Naive thymus-derived CD4-positive, alpha-beta T cell (primary cell): ENCODE measurements at regions of chr17 and their contacts with region 1.

Region 1: DNA sequence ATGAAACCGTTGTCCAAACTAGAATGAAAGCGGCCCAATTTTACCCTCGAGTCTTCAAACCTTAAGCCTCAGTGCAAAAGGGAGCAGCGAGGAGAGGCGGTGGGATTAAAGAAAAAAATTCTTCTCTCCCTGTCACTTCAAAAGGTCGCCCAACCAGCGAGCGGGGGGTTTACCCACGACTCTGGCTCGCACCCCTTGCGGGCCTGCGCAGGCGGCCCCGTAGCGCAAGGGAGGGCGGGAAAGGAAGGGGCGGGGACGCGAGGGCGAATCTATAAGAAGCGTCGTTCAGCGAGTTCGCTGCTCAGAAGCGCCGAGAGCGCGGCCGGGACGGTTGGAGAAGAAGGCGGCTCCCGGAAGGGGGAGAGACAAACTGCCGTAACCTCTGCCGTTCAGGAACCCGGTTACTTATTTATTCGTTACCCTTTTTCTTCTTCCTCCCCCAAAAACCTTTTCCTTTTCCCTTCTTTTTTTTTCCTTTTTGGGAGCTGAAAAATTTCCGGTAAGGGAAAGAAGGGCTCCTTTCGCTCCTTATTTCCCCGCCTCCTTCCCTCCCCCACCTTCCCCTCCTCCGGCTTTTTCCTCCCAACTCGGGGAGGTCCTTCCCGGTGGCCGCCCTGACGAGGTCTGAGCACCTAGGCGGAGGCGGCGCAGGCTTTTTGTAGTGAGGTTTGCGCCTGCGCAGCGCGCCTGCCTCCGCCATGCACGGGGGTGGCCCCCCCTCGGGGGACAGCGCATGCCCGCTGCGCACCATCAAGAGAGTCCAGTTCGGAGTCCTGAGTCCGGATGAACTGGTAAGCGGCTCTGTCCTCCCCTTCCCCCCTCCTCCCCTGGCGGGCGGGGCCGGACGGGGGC is at the start of gene POLR2A:
- DNase-seq: peak; percentile 97 to 99 (median 99)
- ATAC-seq: peak; percentile 80
- H3K4me3 ChIP-seq: peak within 1 kb of the TSS; percentile 100
- H3K4me3 Mint-ChIP-seq: peak within 1 kb of the TSS; percentile 86 to 100 (median 98)
- H3K27ac ChIP-seq: peak within 1 kb of the TSS; percentile 97
- H3K27ac Mint-ChIP-seq: peak within 1 kb of the TSS; percentile 99 to 100 (median 100)
- H3K4me1 ChIP-seq: peaks cover 38 to 55% of the 10 kb centered on the region in 2 donors
- H3K4me1 Mint-ChIP-seq: peaks cover 60 to 81% (median 72%) of the 10 kb centered on the region in 7 donors
- H3K27me3 ChIP-seq: no peaks in the 10 kb centered on the region
- H3K27me3 Mint-ChIP-seq: no peaks in the 10 kb centered on the region
- total RNA-seq, gene POLR2A: 165 to 501 (median 225) TPM

Region 2: GRCh38 chr17:7035591-7036368 is 448.5 kb before region 1 on chr17 and contains the start of gene SLC16A13:
- CTCF ChIA-PET with region 1: no interaction called
- POLR2A ChIA-PET with region 1: interaction called, 4 read pairs
- intact Hi-C with region 1: loop called in 1 of 2 experiments (anchors 5 kb)
- DNase-seq: peak; percentile 87 to 99 (median 97)
- ATAC-seq: peak; percentile 95
- H3K4me3 ChIP-seq: peak within 1 kb of the TSS; percentile 67
- H3K4me3 Mint-ChIP-seq: peak within 1 kb of the TSS; percentile 89 to 95 (median 93)
- H3K27ac ChIP-seq: peak within 1 kb of the TSS; percentile 94
- H3K27ac Mint-ChIP-seq: peak within 1 kb of the TSS; percentile 96 to 99 (median 98)
- H3K4me1 ChIP-seq: peaks cover 26 to 36% of the 10 kb centered on the region in 2 donors
- H3K4me1 Mint-ChIP-seq: peaks cover 39 to 80% (median 58%) of the 10 kb centered on the region in 7 donors
- H3K27me3 ChIP-seq: no peaks in the 10 kb centered on the region
- H3K27me3 Mint-ChIP-seq: no peaks in the 10 kb centered on the region
- total RNA-seq, gene SLC16A13: 3.4 to 20.9 (median 15.0) TPM

Region 3: GRCh38 chr17:7329374-7329996 is 154.8 kb before region 1 on chr17:
- CTCF ChIA-PET with region 1: no interaction called
- POLR2A ChIA-PET with region 1: interaction called, 7 read pairs
- intact Hi-C with region 1: loop called in 1 of 2 experiments (anchors 1 kb)
- DNase-seq: peak; percentile 84 to 98 (median 98)
- ATAC-seq: peak; percentile 91
- H3K4me3 ChIP-seq: peak overlapping the region; percentile 95
- H3K4me3 Mint-ChIP-seq: peak overlapping the region; percentile 89 to 100 (median 96)
- H3K27ac ChIP-seq: peak overlapping the region; percentile 88
- H3K27ac Mint-ChIP-seq: peak overlapping the region; percentile 93 to 99 (median 97)
- H3K4me1 ChIP-seq: peaks cover 15 to 36% of the 10 kb centered on the region in 2 donors
- H3K4me1 Mint-ChIP-seq: peaks cover 29 to 61% (median 44%) of the 10 kb centered on the region in 7 donors
- H3K27me3 ChIP-seq: no peaks in the 10 kb centered on the region
- H3K27me3 Mint-ChIP-seq: no peaks in the 10 kb centered on the region

Region 4: GRCh38 chr17:7435221-7435675 is 49.0 kb before region 1 on chr17 and contains the start of gene TMEM102:
- CTCF ChIA-PET with region 1: interaction called, 34 read pairs
- POLR2A ChIA-PET with region 1: interaction called, 116 read pairs
- intact Hi-C with region 1: loop called (anchors 1 kb)
- DNase-seq: peak; percentile 92 to 99 (median 99)
- ATAC-seq: peak; percentile 94
- H3K4me3 ChIP-seq: peak within 1 kb of the TSS; percentile 65
- H3K4me3 Mint-ChIP-seq: peak within 1 kb of the TSS; percentile 86 to 96 (median 94)
- H3K27ac ChIP-seq: peak within 1 kb of the TSS; percentile 83
- H3K27ac Mint-ChIP-seq: peak within 1 kb of the TSS; percentile 89 to 97 (median 95)
- H3K4me1 ChIP-seq: peaks cover 16 to 38% of the 10 kb centered on the region in 2 donors
- H3K4me1 Mint-ChIP-seq: peaks cover 26 to 42% (median 36%) of the 10 kb centered on the region in 7 donors
- H3K27me3 ChIP-seq: peaks cover 0 to 9% of the 10 kb centered on the region in 2 donors
- H3K27me3 Mint-ChIP-seq: peaks cover 11 to 13% (median 12%) of the 10 kb centered on the region in 5 donors
- total RNA-seq, gene TMEM102: 8.2 to 19.1 (median 16.5) TPM

Region 5: GRCh38 chr17:7496470-7497183 is 12.3 kb after region 1 on chr17:
- CTCF ChIA-PET with region 1: no interaction called
- POLR2A ChIA-PET with region 1: interaction called, 29 read pairs
- intact Hi-C with region 1: loop called in 1 of 2 experiments (anchors 1 kb)
- DNase-seq: no peak
- ATAC-seq: no peak
- H3K4me3 ChIP-seq: no peak overlapping the region
- H3K4me3 Mint-ChIP-seq: no peak overlapping the region
- H3K27ac ChIP-seq: no peak overlapping the region
- H3K27ac Mint-ChIP-seq: peak overlapping the region in 4 of 9 donors; percentile 47 to 72 (median 61)
- H3K4me1 ChIP-seq: peaks cover 0 to 2% of the 10 kb centered on the region in 2 donors
- H3K4me1 Mint-ChIP-seq: peaks cover 15 to 33% (median 23%) of the 10 kb centered on the region in 7 donors
- H3K27me3 ChIP-seq: no peaks in the 10 kb centered on the region
- H3K27me3 Mint-ChIP-seq: no peaks in the 10 kb centered on the region

Region 6: GRCh38 chr17:7583253-7584109 is 99.2 kb after region 1 on chr17 and contains the start of gene MPDU1:
- CTCF ChIA-PET with region 1: no interaction called
- POLR2A ChIA-PET with region 1: interaction called, 18 read pairs
- intact Hi-C with region 1: loop called in 1 of 2 experiments (anchors 1 kb)
- DNase-seq: peak; percentile 89 to 98 (median 97)
- ATAC-seq: peak; percentile 80
- H3K4me3 ChIP-seq: peak within 1 kb of the TSS; percentile 100
- H3K4me3 Mint-ChIP-seq: peak within 1 kb of the TSS; percentile 89 to 100 (median 99)
- H3K27ac ChIP-seq: peak within 1 kb of the TSS; percentile 95
- H3K27ac Mint-ChIP-seq: peak within 1 kb of the TSS; percentile 98 to 100 (median 100)
- H3K4me1 ChIP-seq: peaks cover 28 to 35% of the 10 kb centered on the region in 2 donors
- H3K4me1 Mint-ChIP-seq: peaks cover 33 to 60% (median 55%) of the 10 kb centered on the region in 7 donors
- H3K27me3 ChIP-seq: no peaks in the 10 kb centered on the region
- H3K27me3 Mint-ChIP-seq: no peaks in the 10 kb centered on the region
- total RNA-seq, gene MPDU1: 25.4 to 79.8 (median 31.4) TPM

Region 7: DNA sequence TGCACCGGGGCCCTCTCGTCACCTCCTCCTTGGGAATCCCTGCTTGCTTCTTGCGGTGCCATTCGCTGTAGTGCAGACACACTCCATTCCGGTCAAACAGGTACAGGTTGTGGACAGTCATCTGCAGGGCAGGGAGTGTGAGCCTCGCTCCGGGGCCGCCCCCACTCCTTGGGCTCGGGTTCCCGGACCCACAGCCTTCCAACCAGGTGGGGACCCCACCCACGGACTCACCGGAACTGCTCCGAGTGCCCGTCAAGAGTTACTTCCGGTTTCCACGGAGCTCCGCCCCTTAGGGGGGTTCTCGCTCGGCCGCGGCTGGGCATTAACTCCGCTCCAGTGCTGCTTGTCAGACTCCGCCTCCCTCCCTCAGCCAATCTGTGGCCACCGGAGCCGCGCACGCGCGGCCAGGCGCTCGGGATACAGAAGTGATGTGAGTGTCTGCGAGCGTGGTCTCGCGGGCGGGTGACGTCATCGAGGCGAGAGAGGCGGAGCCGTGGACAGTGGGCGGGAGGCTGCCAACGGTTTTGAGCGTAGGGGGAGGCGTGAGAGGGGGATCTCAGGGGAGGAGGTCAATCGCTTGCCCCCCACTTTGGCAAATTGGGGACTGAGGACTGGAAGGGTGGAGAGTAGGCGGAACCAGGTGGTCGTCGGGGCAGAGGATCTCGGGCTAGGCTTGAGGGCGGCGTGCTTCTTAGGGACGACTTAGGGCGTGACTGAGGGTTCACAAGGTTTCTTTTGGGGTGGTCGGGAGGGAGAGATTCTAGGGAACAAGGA is 447.6 kb after region 1 on chr17 and contains the starts of genes CNTROB and TRAPPC1:
- CTCF ChIA-PET with region 1: no interaction called
- POLR2A ChIA-PET with region 1: no interaction called
- intact Hi-C with region 1: loop called in 1 of 2 experiments (anchors 5 kb)
- DNase-seq: peak; percentile 97 to 100 (median 99)
- ATAC-seq: peak; percentile 98
- H3K4me3 ChIP-seq: peak within 1 kb of the TSS; percentile 66
- H3K4me3 Mint-ChIP-seq: peak within 1 kb of the TSS; percentile 95 to 100 (median 96)
- H3K27ac ChIP-seq: peak within 1 kb of the TSS; percentile 88
- H3K27ac Mint-ChIP-seq: peak within 1 kb of the TSS; percentile 82 to 99 (median 96)
- H3K4me1 ChIP-seq: peaks cover 20 to 28% of the 10 kb centered on the region in 2 donors
- H3K4me1 Mint-ChIP-seq: peaks cover 31 to 60% (median 54%) of the 10 kb centered on the region in 7 donors
- H3K27me3 ChIP-seq: no peaks in the 10 kb centered on the region
- H3K27me3 Mint-ChIP-seq: no peaks in the 10 kb centered on the region
- total RNA-seq, gene CNTROB: 29.0 to 50.5 (median 33.6) TPM
- total RNA-seq, gene TRAPPC1: 71.4 to 216 (median 103) TPM

Region 8: GRCh38 chr17:8503368-8503767 is 1019.1 kb after region 1 on chr17:
- CTCF ChIA-PET with region 1: no interaction called
- POLR2A ChIA-PET with region 1: no interaction called
- intact Hi-C with region 1: no loop called
- DNase-seq: no peak
- ATAC-seq: no peak
- H3K4me3 ChIP-seq: no peak overlapping the region
- H3K4me3 Mint-ChIP-seq: no peak overlapping the region
- H3K27ac ChIP-seq: no peak overlapping the region
- H3K27ac Mint-ChIP-seq: peak overlapping the region in 1 of 9 donors; percentile 20
- H3K4me1 ChIP-seq: no peaks in the 10 kb centered on the region
- H3K4me1 Mint-ChIP-seq: peaks cover 0 to 8% (median 0%) of the 10 kb centered on the region in 7 donors
- H3K27me3 ChIP-seq: no peaks in the 10 kb centered on the region
- H3K27me3 Mint-ChIP-seq: peaks cover 0 to 3% (median 0%) of the 10 kb centered on the region in 5 donors